OCI-LY7 (cell line): ENCODE measurements at regions of chr17 and their contacts with region 1.

Region 1: DNA sequence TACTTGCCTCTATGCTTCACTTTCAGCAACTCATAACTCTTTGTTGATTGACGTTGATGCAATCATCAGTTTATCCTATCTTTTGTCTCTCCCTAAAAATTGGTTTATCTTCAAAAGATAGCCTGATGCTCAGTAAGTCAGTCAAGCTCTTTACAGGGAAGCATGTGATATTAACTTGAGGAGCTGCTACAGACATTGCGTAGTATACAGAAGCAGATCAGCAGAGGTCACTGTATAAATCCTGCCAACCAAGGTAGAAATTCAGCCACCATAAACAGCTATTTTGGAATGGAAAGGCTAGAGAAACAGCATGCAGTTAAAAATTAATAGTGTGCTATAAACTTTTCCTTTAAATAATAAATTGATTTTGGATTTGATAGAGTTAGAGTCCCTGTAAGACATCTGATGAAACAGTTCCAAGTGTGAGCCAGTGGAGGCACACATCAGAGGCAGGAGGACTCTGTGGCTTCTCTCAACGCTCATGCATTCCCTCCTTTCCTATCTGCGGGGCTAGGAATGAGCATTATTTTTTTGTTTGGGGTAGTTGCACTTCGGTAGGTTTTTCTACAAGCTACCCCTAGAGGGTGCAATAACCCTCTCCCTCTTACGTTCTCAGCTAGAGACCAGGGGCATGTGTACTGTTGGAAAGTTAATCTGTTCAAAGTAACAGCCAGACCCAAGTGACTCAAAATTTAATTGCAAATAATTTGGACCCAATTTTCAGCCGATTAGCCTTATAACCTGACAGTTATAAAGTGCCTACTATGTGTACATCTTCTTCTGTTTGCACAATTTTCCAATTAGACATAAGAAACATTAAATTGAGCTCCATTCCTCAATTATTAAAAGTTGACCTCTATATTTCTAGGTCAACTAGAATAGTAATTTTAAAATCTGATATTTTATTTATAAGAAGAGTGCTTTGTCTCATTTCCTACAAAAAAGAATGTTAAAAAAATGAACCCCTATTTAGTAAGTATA is 647.7 kb upstream of the SOX9 start:
- DNase-seq: peak; percentile 74
- H3K4me3 ChIP-seq: no peak overlapping the region
- H3K27ac ChIP-seq: no peak overlapping the region
- H3K4me1 ChIP-seq: no peaks in the 10 kb centered on the region
- CTCF ChIP-seq: peak; percentile 98

Region 2: GRCh38 chr17:71486261-71486660 is 13.2 kb after region 1 on chr17:
- CTCF ChIA-PET with region 1: no interaction called
- POLR2A ChIA-PET with region 1: interaction called, 10 read pairs
- intact Hi-C with region 1: no loop called
- DNase-seq: no peak
- H3K4me3 ChIP-seq: no peak overlapping the region
- H3K27ac ChIP-seq: no peak overlapping the region
- H3K4me1 ChIP-seq: no peaks in the 10 kb centered on the region
- CTCF ChIP-seq: no peak

Region 3: DNA sequence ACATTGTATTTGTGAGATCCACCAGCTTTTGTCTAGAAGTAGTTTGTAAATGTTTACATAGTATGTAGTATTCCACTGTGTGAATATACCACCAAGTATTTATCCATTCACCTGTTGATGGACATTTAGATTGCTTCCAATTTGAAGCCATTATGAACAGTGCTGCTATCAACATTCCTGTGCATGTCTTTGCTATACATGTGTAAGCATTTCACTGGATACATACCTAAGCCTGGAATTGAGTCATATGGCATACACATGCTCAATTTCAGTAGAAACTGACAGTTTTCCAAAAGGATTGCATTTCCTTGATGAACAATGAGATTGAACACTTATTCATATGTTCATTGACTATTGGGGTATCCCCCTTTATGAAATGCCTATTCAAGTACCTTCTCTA is 107.1 kb after region 1 on chr17:
- CTCF ChIA-PET with region 1: no interaction called
- POLR2A ChIA-PET with region 1: no interaction called
- intact Hi-C with region 1: no loop called
- DNase-seq: no peak
- H3K4me3 ChIP-seq: no peak overlapping the region
- H3K27ac ChIP-seq: no peak overlapping the region
- H3K4me1 ChIP-seq: no peaks in the 10 kb centered on the region
- CTCF ChIP-seq: no peak

Region 4: GRCh38 chr17:71632328-71632727 is 159.2 kb after region 1 on chr17:
- CTCF ChIA-PET with region 1: no interaction called
- POLR2A ChIA-PET with region 1: no interaction called
- intact Hi-C with region 1: no loop called
- DNase-seq: no peak
- H3K4me3 ChIP-seq: no peak overlapping the region
- H3K27ac ChIP-seq: no peak overlapping the region
- H3K4me1 ChIP-seq: no peaks in the 10 kb centered on the region
- CTCF ChIP-seq: no peak

Region 5: GRCh38 chr17:72118335-72119076 is 645.4 kb after region 1 on chr17:
- CTCF ChIA-PET with region 1: no interaction called
- POLR2A ChIA-PET with region 1: no interaction called
- intact Hi-C with region 1: loop called (anchors 5 kb)
- DNase-seq: peak; percentile 54
- H3K4me3 ChIP-seq: no peak overlapping the region
- H3K27ac ChIP-seq: no peak overlapping the region
- H3K4me1 ChIP-seq: no peaks in the 10 kb centered on the region
- CTCF ChIP-seq: peak; percentile 100